IMR-90 (cell line): ENCODE measurements at regions of chr18 and their contacts with region 1.

Region 1: GRCh38 chr18:46481048-46481846 is 175.8 kb downstream of the LOXHD1 start:
- DNase-seq: peak; percentile 52
- ATAC-seq: peak; percentile 75
- H3K4me3 ChIP-seq: no peak overlapping the region
- H3K27ac ChIP-seq: no peak overlapping the region
- H3K4me1 ChIP-seq: no peaks in the 10 kb centered on the region
- H3K27me3 ChIP-seq: no peaks in the 10 kb centered on the region; the same call in 1 of the 2 replicates
- CTCF ChIP-seq: peak; percentile 65
- POLR2A ChIP-seq: no peak
- RAD21 ChIP-seq: peak; percentile 69

Region 2: DNA sequence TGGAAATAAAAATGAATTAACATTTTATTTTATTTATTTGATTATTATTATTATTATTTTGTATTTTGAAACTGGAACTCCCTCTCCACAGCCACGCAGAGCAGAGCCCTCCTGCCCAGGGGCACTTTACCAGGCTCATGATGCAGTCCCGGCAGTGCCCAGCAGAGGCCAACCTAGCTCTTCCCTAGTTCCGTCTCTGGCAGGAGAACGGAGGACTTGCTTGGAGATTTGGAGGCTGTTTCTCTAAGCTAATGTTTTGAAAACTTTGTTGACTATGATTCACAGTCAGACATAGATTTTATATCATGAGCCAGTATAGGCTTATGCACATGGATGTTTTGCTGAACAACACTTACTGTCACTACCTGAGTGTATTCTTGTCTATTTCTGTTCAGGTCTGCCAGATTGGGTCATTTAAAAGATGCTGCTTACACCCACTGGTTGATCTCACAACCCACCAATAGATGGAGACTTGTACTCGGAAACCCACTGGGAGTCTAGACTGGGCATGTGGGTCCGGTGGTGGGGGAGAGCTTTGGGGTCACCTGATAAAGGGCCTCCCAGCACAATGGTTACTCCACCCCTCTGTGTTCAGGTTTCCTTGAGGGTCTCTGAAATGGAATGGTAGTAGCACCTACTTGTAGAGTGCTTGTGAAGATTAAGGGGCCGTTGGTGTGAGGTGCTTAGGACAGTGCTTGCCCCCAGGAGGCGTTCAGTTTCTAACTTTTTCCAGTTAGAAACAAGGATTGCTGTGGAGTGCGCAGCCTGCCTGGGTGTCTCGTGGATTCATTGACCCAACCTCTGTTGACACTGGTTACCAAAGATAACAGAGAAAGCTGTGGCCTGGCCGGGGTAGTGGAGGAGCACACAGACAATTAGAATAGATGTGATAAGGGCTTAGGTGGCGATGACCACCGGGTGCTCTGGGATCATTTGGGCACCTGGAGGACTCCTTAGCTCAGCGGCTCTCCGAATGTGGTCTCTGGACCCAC is 199.8 kb before region 1 on chr18:
- CTCF ChIA-PET with region 1: interaction called, 4 read pairs
- POLR2A ChIA-PET with region 1: no interaction called
- dilution Hi-C with region 1: no loop called
- in situ Hi-C with region 1: loop called (anchors 10 kb)
- intact Hi-C with region 1: loop called (anchors 1 kb)
- DNase-seq: peak; percentile 79
- ATAC-seq: peak; percentile 94
- H3K4me3 ChIP-seq: no peak overlapping the region
- H3K27ac ChIP-seq: no peak overlapping the region
- H3K4me1 ChIP-seq: peaks cover 14% of the 10 kb centered on the region
- H3K27me3 ChIP-seq: no peaks in the 10 kb centered on the region
- CTCF ChIP-seq: peak; percentile 83
- POLR2A ChIP-seq: no peak
- RAD21 ChIP-seq: peak; percentile 91

Region 3: GRCh38 chr18:46641917-46642316 is 160.7 kb after region 1 on chr18:
- CTCF ChIA-PET with region 1: no interaction called
- POLR2A ChIA-PET with region 1: no interaction called
- dilution Hi-C with region 1: no loop called
- in situ Hi-C with region 1: no loop called
- intact Hi-C with region 1: no loop called
- DNase-seq: no peak
- ATAC-seq: no peak
- H3K4me3 ChIP-seq: no peak overlapping the region
- H3K27ac ChIP-seq: no peak overlapping the region
- H3K4me1 ChIP-seq: no peaks in the 10 kb centered on the region
- H3K27me3 ChIP-seq: no peaks in the 10 kb centered on the region; the same call in 1 of the 2 replicates
- CTCF ChIP-seq: no peak
- POLR2A ChIP-seq: no peak
- RAD21 ChIP-seq: no peak